GM10248 (cell line): ENCODE measurements at regions of chr17 and their contacts with region 1.

Region 1: DNA sequence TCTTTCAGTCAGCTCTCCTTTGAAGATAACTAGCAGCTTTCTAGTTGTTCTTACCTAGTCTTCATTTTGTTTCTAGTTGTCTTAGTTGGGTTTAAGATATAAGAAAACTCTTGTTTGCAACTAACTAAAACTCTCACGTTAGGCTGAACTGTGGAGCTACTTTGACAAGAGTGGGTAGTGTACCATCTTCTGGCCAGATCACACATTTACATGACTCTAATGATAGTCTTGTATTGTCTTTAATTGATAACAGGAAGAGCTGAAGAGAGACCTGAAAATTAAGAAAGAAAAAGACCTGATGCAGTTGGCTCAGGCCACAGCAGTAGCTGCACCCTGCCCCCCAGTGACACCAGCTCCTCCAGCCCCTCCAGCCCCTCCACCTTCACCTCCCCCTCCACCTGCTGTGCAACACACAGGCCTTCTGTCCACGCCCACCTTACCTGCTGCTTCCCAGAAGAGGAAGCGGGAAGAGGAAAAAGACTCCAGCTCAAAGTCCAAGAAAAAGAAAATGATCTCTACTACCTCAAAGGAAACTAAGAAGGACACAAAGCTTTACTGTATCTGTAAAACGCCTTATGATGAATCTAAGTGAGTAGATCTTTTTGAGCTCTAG is 36.9 kb downstream of the C17orf58 start:
- DNase-seq: no peak
- CTCF ChIP-seq: no peak

Region 2: DNA sequence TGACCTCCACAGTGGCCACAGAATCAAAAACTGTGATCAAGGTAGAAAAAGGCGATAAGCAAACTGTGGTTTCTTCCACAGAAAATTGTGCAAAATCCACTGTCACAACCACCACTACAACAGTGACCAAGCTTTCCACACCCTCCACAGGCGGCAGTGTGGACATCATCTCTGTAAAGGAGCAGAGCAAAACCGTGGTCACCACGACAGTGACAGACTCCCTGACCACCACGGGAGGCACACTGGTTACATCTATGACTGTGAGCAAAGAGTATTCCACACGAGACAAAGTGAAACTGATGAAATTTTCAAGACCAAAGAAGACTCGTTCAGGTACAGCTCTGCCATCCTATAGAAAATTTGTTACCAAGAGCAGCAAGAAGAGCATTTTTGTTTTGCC is 46.7 kb before region 1 on chr17:
- CTCF ChIA-PET with region 1: no interaction called
- POLR2A ChIA-PET with region 1: no interaction called
- DNase-seq: no peak
- CTCF ChIP-seq: no peak

Region 3: GRCh38 chr17:67947325-67947813 is 12.0 kb before region 1 on chr17:
- CTCF ChIA-PET with region 1: interaction called, 17 read pairs
- POLR2A ChIA-PET with region 1: no interaction called
- DNase-seq: no peak
- CTCF ChIP-seq: no peak

Region 4: GRCh38 chr17:68074279-68074678 is 114.9 kb after region 1 on chr17:
- CTCF ChIA-PET with region 1: no interaction called
- POLR2A ChIA-PET with region 1: no interaction called
- DNase-seq: no peak
- CTCF ChIP-seq: no peak